CD14-positive monocyte (primary cell): ENCODE measurements at regions of chr19 and their contacts with region 1.

Region 1: GRCh38 chr19:54023191-54023590 is 31.8 kb downstream of the CACNG6 start:
- DNase-seq: peak in 1 of 3 donors; percentile 41
- H3K4me3 ChIP-seq: peak overlapping the region in 2 of 3 experiments; percentile 41 to 72
- H3K4me3 Mint-ChIP-seq: no peak overlapping the region
- H3K27ac ChIP-seq: peak overlapping the region; percentile 86 to 95
- H3K27ac Mint-ChIP-seq: peak overlapping the region; percentile 93 to 100 (median 99)
- H3K4me1 ChIP-seq: peaks cover 66% of the 10 kb centered on the region in 2 donors
- H3K4me1 Mint-ChIP-seq: peaks cover 67% of the 10 kb centered on the region
- H3K27me3 ChIP-seq: no peaks in the 10 kb centered on the region
- H3K27me3 Mint-ChIP-seq: peaks cover 4 to 8% (median 4%) of the 10 kb centered on the region in 3 donors
- CTCF ChIP-seq: no peak

Region 2: GRCh38 chr19:53977429-53977990 is 45.7 kb before region 1 on chr19:
- intact Hi-C with region 1: loop called (anchors 5 kb)
- DNase-seq: peak; percentile 66 to 84 (median 77)
- H3K4me3 ChIP-seq: peak overlapping the region; percentile 14 to 66 (median 25)
- H3K4me3 Mint-ChIP-seq: peak overlapping the region; percentile 73 to 86
- H3K27ac ChIP-seq: no peak overlapping the region
- H3K27ac Mint-ChIP-seq: peak overlapping the region in 3 of 7 donors; percentile 52 to 82 (median 58)
- H3K4me1 ChIP-seq: peaks cover 32 to 44% of the 10 kb centered on the region in 2 donors
- H3K4me1 Mint-ChIP-seq: peaks cover 36% of the 10 kb centered on the region
- H3K27me3 ChIP-seq: peaks cover 10 to 55% of the 10 kb centered on the region in 2 donors
- H3K27me3 Mint-ChIP-seq: peaks cover 58 to 74% (median 71%) of the 10 kb centered on the region in 3 donors
- CTCF ChIP-seq: no peak

Region 3: DNA sequence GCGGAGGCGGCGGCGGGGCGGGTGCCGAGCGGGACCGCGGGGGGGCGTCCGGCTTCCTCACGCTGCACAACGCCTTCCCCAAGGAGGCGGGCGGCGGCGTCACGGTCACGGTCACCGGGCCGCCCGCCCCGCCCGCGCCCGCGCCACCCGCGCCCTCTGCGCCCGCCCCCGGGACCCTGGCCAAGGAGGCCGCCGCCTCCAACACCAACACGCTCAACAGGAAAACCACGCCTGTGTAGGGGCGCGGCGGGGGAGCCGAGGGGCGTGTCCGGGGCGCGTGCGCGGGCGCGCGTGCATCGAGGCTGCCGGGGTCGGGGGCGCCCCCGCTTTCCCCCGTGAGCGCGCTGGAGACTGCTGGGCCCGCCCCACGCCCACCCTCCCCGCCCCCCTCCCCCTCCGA is 40.6 kb before region 1 on chr19:
- intact Hi-C with region 1: loop called (anchors 5 kb)
- DNase-seq: peak; percentile 36 to 45 (median 41)
- H3K4me3 ChIP-seq: no peak overlapping the region
- H3K4me3 Mint-ChIP-seq: no peak overlapping the region
- H3K27ac ChIP-seq: no peak overlapping the region
- H3K27ac Mint-ChIP-seq: no peak overlapping the region
- H3K4me1 ChIP-seq: peaks cover 31 to 42% of the 10 kb centered on the region in 2 donors
- H3K4me1 Mint-ChIP-seq: peaks cover 35% of the 10 kb centered on the region
- H3K27me3 ChIP-seq: peaks cover 19 to 79% of the 10 kb centered on the region in 2 donors
- H3K27me3 Mint-ChIP-seq: peaks cover 39 to 46% (median 41%) of the 10 kb centered on the region in 3 donors
- CTCF ChIP-seq: no peak